ENCODE measurements at regions of chr19 and their contacts with region 1.

Region 1: GRCh38 chr19:1255547-1256227 is 7.3 kb downstream of the MIDN start:
- DNase-seq: no peak
- H3K4me3 ChIP-seq: no peak overlapping the region
- H3K27me3 ChIP-seq: no peaks in the 10 kb centered on the region
- CTCF ChIP-seq: no peak

Region 2: DNA sequence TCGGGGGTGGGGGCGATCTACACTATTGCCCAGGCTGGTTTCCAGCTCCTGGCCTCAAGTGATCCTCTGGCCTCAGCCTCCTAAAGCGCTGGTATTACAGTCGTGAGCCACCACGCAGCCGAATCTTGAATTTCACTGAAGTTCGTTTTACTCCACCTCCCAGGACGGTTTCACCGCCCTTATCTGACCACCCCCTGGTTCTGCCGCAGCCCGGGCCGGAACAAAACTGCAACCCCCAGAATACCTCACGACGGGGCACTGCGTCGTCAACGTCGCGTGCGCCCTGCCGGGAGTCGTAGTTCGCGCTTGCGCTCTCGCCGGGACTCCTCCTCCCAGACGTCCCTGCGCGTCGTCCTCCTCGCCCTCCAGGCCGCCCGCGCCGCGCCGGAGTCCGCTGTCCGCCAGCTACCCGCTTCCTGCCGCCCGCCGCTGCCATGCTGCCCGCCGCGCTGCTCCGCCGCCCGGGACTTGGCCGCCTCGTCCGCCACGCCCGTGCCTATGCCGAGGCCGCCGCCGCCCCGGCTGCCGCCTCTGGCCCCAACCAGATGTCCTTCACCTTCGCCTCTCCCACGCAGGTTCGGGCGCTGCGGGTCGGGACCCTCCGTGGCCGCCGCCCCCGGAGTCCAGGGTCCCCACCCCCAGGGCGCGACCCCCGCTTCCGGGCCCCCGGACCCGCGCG is 14.1 kb before region 1 on chr19 and contains the start of gene ATP5F1D:
- CTCF ChIA-PET with region 1: interaction called, 437 read pairs
- POLR2A ChIA-PET with region 1: interaction called, 7 read pairs
- DNase-seq: no peak
- H3K4me3 ChIP-seq: peak within 1 kb of the TSS; percentile 75
- H3K27me3 ChIP-seq: no peaks in the 10 kb centered on the region
- CTCF ChIP-seq: no peak
- polyA plus RNA-seq, gene ATP5F1D: 57.9 and 65.1 TPM in 2 replicates

Region 3: GRCh38 chr19:1355568-1356507 is 100.2 kb after region 1 on chr19:
- CTCF ChIA-PET with region 1: no interaction called
- POLR2A ChIA-PET with region 1: no interaction called
- DNase-seq: no peak
- H3K4me3 ChIP-seq: peak overlapping the region; percentile 74
- H3K27me3 ChIP-seq: no peaks in the 10 kb centered on the region
- CTCF ChIP-seq: no peak

Region 4: GRCh38 chr19:1373534-1374249 is 118.0 kb after region 1 on chr19:
- CTCF ChIA-PET with region 1: no interaction called
- POLR2A ChIA-PET with region 1: no interaction called
- DNase-seq: no peak
- H3K4me3 ChIP-seq: no peak overlapping the region
- H3K27me3 ChIP-seq: no peaks in the 10 kb centered on the region
- CTCF ChIP-seq: no peak

Measured in BJ (cell line).